ENCODE measurements at regions of chr15 and their contacts with region 1.

Region 1: DNA sequence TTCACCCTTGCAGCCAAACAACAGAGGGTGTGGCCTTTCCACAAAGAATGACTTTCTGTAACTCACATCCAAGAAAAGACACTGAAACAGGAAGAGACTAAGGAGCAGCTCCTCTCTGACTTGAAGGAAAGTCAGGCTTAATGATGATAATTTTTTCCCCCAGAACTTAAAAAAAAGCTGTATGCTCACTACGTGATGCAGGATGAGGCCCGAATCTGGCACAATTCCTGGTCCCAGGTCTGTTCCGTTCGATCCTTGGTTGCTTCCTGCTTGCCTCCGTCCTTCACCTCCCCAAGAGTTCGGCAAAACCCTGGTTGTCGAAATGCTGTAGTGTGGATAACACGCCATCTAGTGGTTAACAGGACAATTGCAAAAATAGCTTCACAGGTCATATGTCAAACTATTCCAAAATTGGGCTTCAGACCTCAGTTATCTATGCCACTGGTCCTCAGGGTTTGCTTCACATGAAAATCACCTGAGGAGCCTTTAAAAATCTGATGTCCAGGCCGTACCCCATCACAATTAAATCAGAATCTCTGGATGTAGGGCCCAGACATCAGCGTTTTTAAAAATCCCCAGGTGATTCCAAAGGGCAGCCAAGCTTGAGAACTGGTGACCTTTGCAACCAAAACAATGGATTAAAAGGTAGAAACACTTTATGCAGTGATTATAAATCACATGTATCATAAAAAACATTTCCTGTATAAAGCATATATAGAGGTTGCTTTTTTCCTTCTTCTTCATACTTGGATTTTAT is 28.1 kb upstream of the SYNM start:
- DNase-seq: peak; percentile 68
- CTCF ChIP-seq: peak; percentile 81

Region 2: DNA sequence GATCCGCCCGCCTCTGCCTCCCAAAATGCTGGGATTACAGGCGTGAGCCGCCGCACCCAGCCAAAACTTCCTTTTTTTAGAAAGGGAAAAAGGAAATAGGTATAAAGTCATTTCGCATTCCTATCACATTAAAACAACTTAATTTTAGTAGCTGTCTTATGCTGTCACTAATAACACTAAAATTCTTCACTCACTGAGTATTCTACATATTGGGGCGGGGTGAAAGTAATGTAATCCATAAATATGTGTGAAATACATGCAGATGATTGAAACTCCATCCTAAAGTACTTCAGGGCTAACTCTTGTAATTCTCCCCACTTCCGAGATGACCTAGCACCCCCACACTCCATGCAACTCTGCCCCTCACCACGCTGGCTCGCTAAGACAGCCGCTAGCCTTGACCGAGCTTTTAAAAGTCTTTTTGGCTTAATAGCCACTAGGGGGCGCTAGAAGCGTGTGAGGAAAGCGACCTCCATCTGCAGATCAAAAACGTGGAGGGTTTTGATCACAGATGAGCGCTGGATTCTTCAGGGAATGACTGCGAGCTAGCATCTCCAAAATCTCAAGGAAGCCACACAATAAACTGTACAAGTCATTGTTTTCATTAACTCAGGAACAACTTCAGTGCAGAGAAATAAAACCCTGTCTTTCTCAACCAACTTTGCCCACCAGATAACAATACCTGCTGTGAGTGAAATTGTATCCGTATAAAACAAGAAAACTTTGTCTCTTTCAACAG is 557.7 kb before region 1 on chr15:
- CTCF ChIA-PET with region 1: interaction called, 27 read pairs
- POLR2A ChIA-PET with region 1: no interaction called
- DNase-seq: peak; percentile 75
- CTCF ChIP-seq: peak; percentile 60

Region 3: DNA sequence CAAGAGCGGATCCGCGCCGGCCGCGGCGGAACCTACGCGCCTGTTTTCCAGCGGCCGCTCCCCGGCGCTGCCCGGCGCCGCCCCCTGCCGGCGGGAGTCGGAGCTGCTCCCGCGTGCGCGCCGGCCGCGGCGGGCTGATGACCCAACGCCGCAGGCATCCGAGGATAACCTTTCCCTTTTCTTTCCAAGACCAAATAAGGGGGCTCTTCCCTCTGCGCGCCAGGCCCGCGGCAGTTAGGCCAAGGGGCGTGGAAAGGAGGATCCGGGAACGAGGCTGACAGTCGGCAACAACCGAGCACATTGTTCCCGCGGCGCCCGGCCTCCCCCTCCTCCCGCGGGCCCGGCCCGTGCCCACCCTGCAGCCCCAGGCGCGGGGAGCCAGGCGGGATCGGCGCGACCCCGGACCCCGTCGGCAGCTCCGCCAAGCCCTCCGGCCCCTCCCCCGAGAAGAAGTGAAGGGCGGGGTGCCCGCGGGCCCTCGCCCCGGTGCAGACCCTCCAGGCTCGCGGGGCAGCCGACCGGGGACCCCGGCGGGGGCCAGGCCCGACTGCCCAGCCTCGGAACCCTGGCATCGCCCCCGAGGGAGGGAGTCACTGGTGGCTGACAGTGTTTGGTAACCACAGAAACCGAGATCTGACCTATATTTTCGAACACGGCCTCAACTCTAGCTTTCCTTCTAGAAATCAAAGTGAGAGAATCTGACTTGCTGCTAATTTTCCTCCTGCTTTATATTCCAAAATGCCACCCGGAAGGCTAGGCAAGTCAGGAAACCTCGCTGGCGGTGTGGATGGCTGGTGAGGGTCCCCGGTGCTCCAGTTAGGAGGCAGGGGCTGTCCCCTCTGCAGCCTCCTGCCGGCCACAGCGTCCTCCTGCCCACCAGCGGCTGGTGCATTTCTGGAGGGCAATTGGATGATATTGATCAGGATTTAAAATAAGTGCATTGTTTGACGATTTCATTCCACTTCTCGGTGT is 17.4 kb before region 1 on chr15:
- CTCF ChIA-PET with region 1: interaction called, 81 read pairs
- POLR2A ChIA-PET with region 1: no interaction called
- DNase-seq: peak; percentile 85
- CTCF ChIP-seq: peak; percentile 93

Region 4: DNA sequence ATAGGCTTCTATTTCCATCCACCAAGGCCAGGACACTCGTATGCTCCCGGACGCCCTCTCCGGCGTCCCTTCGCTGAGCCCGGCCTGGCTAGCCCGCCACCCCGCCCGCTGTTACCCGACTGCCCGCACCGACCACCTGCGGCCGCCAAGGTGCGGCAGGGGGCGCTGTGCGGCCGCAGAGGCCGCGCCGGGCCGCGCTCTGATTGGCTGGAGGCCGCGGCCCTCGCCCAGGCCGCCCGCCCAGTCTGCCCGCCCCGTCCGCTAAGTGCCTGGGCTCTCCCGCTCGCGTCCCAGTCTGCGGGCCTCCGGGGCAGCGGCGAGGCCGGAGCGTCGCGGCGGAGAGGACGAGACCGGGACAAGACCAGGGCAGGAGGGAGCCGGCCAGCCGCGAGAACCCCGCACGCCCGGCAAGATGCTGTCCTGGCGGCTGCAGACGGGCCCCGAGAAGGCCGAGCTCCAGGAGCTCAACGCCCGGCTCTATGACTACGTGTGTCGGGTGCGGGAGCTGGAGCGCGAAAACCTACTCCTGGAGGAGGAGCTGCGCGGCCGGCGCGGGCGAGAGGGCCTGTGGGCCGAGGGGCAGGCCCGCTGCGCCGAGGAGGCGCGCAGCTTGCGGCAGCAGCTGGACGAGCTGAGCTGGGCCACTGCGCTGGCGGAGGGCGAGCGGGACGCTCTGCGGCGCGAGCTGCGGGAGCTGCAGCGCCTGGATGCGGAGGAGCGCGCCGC is 28.2 kb after region 1 on chr15 and contains the start of gene SYNM:
- CTCF ChIA-PET with region 1: interaction called, 17 read pairs
- POLR2A ChIA-PET with region 1: no interaction called
- DNase-seq: peak; percentile 90
- CTCF ChIP-seq: peak; percentile 78

Region 5: DNA sequence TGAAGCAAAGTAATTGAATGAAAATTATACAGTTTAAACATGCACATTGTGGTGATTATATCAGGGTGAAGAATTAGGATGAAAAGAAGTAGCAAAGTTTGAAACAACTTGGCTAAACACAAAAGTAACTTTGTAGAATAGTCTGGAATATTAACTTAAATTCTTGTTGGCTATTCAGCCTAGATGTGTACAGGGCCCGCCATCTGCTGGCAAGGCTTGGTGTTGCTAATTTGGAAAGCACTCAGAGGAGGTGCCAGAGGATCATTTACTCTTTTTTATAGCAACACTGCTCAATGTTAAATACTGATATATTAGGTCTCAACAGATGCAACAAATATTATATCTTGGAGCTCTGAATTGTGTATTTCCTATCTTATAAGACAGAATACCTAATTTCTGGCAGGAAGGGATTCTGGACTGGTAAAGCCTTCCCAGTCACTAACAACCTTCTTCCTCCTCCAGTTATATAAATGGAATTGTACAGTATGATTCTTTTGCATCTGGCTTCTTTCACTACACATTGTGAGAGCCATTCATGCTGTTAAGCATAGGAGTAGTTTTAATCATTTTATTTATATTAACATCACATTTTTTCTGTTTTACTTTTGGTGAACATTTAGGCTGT is 136.6 kb after region 1 on chr15:
- CTCF ChIA-PET with region 1: interaction called, 13 read pairs
- POLR2A ChIA-PET with region 1: no interaction called
- DNase-seq: peak; percentile 67
- CTCF ChIP-seq: peak; percentile 77

Region 6: GRCh38 chr15:99466701-99467337 is 390.1 kb after region 1 on chr15:
- CTCF ChIA-PET with region 1: no interaction called
- POLR2A ChIA-PET with region 1: no interaction called
- DNase-seq: no peak
- CTCF ChIP-seq: no peak

Region 7: DNA sequence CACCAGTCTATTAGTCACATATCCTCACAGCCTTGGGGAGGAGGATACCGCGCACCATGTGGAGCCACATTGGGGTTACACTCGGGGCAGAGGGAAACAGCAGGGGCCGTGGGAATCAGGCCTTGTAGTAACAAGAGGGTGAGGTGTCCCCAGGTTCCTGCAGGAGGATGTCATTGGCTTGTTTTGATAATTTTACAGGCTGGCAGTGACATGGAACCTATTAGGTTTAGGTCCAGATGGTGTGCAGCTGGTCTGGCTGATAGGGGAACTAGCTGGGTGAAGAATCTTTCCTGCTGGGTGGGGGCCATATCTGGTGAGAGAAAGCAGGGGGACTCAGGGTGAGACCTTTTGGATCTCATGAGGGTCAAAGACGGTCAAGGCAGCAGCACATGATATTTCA is 479.3 kb after region 1 on chr15:
- CTCF ChIA-PET with region 1: no interaction called
- POLR2A ChIA-PET with region 1: no interaction called
- DNase-seq: no peak
- CTCF ChIP-seq: no peak

Measured in GM10248 (cell line).